ENCODE measurements at regions of chr12 and their contacts with region 1.

Region 1: GRCh38 chr12:4320853-4321701 is at the start of gene TIGAR:
- DNase-seq: peak; percentile 95
- ATAC-seq: peak; percentile 97
- H3K4me3 ChIP-seq: peak within 1 kb of the TSS; percentile 69 to 98 (median 90)
- H3K4me3 Mint-ChIP-seq: peak within 1 kb of the TSS; percentile 94
- H3K27ac ChIP-seq: peak within 1 kb of the TSS; percentile 90 to 91
- H3K27ac Mint-ChIP-seq: peak within 1 kb of the TSS; percentile 88
- H3K4me1 ChIP-seq: peaks cover 26 to 30% of the 10 kb centered on the region in 2 donors
- H3K4me1 Mint-ChIP-seq: peaks cover 32% of the 10 kb centered on the region
- H3K27me3 ChIP-seq: no peaks in the 10 kb centered on the region
- H3K27me3 Mint-ChIP-seq: no peaks in the 10 kb centered on the region
- CTCF ChIP-seq: no peak
- total RNA-seq, gene TIGAR: 6.6 and 14.2 TPM in 2 replicates

Region 2: GRCh38 chr12:3463921-3464320 is 857.2 kb before region 1 on chr12:
- CTCF ChIA-PET with region 1: no interaction called
- POLR2A ChIA-PET with region 1: no interaction called
- intact Hi-C with region 1: no loop called
- DNase-seq: no peak
- ATAC-seq: no peak
- H3K4me3 ChIP-seq: no peak overlapping the region
- H3K4me3 Mint-ChIP-seq: no peak overlapping the region
- H3K27ac ChIP-seq: no peak overlapping the region
- H3K27ac Mint-ChIP-seq: no peak overlapping the region
- H3K4me1 ChIP-seq: no peaks in the 10 kb centered on the region
- H3K4me1 Mint-ChIP-seq: no peaks in the 10 kb centered on the region
- H3K27me3 ChIP-seq: peaks cover 0 to 4% (median 0%) of the 10 kb centered on the region in 4 experiments
- H3K27me3 Mint-ChIP-seq: peaks cover 26% of the 10 kb centered on the region
- CTCF ChIP-seq: no peak

Region 3: DNA sequence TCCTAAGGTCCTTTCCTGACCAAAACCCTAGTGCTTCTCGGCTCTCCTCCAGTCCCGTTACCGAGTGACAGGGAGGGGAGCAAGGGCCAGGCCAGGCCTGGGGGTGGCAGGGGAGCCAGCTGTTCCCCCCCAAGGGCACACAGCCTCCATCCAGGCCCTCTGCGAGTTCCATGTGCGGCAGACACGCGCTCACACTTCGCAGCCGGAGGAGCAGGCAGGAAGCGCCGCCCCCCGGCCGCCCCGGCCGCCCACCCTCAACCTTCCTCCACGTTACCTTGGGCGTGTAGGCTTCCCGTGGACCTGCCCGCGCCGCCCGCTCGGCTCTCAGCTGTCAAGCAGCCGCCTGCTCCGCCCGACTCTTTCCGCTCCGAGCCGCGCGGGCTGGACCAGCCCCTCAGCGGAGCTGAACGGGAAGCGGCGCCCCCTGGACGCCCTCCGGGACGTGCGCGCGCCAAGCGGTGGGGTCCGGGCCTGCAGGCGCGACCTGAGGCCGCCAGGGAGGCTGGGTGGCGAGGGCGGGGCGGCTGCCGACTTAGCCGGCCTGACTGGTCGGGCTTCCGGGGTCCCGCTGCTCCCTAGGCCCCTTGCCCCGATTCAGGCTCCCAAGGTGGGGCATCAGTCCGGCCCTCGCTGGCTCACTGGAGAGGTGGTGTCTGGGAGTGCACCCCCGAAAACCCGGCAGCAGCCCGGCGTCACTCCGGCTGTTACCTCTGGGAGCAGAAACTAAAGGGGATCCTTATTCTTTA is 568.2 kb before region 1 on chr12 and contains the start of gene CRACR2A:
- CTCF ChIA-PET with region 1: no interaction called
- POLR2A ChIA-PET with region 1: interaction called, 5 read pairs
- intact Hi-C with region 1: loop called (anchors 2 kb)
- DNase-seq: peak; percentile 89
- ATAC-seq: peak; percentile 88
- H3K4me3 ChIP-seq: peak within 1 kb of the TSS; percentile 68 to 98 (median 82)
- H3K4me3 Mint-ChIP-seq: peak within 1 kb of the TSS; percentile 92
- H3K27ac ChIP-seq: peak within 1 kb of the TSS; percentile 92 to 95
- H3K27ac Mint-ChIP-seq: peak within 1 kb of the TSS; percentile 91
- H3K4me1 ChIP-seq: peaks cover 20 to 29% of the 10 kb centered on the region in 2 donors
- H3K4me1 Mint-ChIP-seq: peaks cover 34% of the 10 kb centered on the region
- H3K27me3 ChIP-seq: no peaks in the 10 kb centered on the region
- H3K27me3 Mint-ChIP-seq: no peaks in the 10 kb centered on the region
- CTCF ChIP-seq: peak; percentile 86
- total RNA-seq, gene CRACR2A: 26.1 and 26.8 TPM in 2 replicates

Region 4: DNA sequence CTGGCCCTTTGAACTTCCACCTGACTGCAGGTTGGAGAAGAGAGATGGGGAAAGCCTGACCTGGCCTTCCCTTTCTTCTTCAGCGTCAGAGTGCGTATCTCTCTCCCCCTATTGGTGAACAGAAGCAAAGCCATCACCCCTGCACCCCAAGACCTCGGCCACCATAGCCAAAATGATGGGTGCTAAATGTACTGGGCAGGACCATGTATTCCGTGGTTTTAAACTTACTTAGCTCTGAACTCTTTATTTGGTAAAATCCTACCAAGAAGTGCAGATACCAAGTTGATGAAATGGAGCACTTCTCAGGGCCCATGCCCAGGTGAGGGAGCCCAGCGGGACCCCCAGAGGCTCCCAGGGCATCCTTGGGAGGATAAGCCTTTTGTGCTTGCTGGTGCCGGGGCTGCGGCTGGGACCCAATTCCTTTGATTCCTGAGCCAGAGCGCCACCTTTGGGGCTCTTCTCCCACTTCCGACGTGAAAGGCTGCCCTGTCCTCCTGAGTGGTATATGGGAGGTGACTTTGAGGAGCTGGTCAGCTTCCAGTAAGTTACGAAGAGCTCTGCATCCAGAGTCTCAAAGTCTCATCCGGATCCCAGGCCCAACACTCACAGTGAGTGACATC is 38.1 kb before region 1 on chr12:
- CTCF ChIA-PET with region 1: no interaction called
- POLR2A ChIA-PET with region 1: no interaction called
- intact Hi-C with region 1: no loop called
- DNase-seq: no peak
- ATAC-seq: no peak
- H3K4me3 ChIP-seq: no peak overlapping the region
- H3K4me3 Mint-ChIP-seq: no peak overlapping the region
- H3K27ac ChIP-seq: no peak overlapping the region
- H3K27ac Mint-ChIP-seq: no peak overlapping the region
- H3K4me1 ChIP-seq: peaks cover 8 to 14% of the 10 kb centered on the region in 2 donors
- H3K4me1 Mint-ChIP-seq: peaks cover 21% of the 10 kb centered on the region
- H3K27me3 ChIP-seq: no peaks in the 10 kb centered on the region
- H3K27me3 Mint-ChIP-seq: no peaks in the 10 kb centered on the region
- CTCF ChIP-seq: no peak

Region 5: GRCh38 chr12:4538207-4539160 is 217.4 kb after region 1 on chr12 and contains the start of gene RAD51AP1:
- CTCF ChIA-PET with region 1: no interaction called
- POLR2A ChIA-PET with region 1: no interaction called
- intact Hi-C with region 1: loop called (anchors 1 kb)
- DNase-seq: peak; percentile 98
- ATAC-seq: peak; percentile 98
- H3K4me3 ChIP-seq: peak within 1 kb of the TSS; percentile 92 to 100 (median 99)
- H3K4me3 Mint-ChIP-seq: peak within 1 kb of the TSS; percentile 95
- H3K27ac ChIP-seq: peak within 1 kb of the TSS; percentile 94 to 99
- H3K27ac Mint-ChIP-seq: peak within 1 kb of the TSS; percentile 97
- H3K4me1 ChIP-seq: peaks cover 8 to 20% of the 10 kb centered on the region in 2 donors
- H3K4me1 Mint-ChIP-seq: peaks cover 35% of the 10 kb centered on the region
- H3K27me3 ChIP-seq: no peaks in the 10 kb centered on the region
- H3K27me3 Mint-ChIP-seq: no peaks in the 10 kb centered on the region
- CTCF ChIP-seq: no peak
- total RNA-seq, gene RAD51AP1: 3.4 and 4.6 TPM in 2 replicates

Measured in B cell (primary cell).